ENCODE measurements at regions of chr19 and their contacts with region 1.

Region 1: GRCh38 chr19:50626795-50627194 is 12.9 kb downstream of the SYT3 start:
- DNase-seq: no peak
- H3K4me3 ChIP-seq: no peak overlapping the region
- H3K27ac ChIP-seq: no peak overlapping the region
- H3K4me1 ChIP-seq: no peaks in the 10 kb centered on the region
- H3K27me3 ChIP-seq: no peaks in the 10 kb centered on the region
- CTCF ChIP-seq: no peak

Region 2: GRCh38 chr19:50607874-50608785 is 18.7 kb before region 1 on chr19:
- CTCF ChIA-PET with region 1: interaction called, 11 read pairs
- POLR2A ChIA-PET with region 1: no interaction called
- intact Hi-C with region 1: no loop called
- DNase-seq: peak; percentile 98
- H3K4me3 ChIP-seq: peak overlapping the region; percentile 38
- H3K27ac ChIP-seq: no peak overlapping the region
- H3K4me1 ChIP-seq: peaks cover 5% of the 10 kb centered on the region
- H3K27me3 ChIP-seq: no peaks in the 10 kb centered on the region
- CTCF ChIP-seq: peak; percentile 96

Region 3: GRCh38 chr19:50724522-50725217 is 97.9 kb after region 1 on chr19:
- CTCF ChIA-PET with region 1: no interaction called
- POLR2A ChIA-PET with region 1: no interaction called
- intact Hi-C with region 1: no loop called
- DNase-seq: peak; percentile 100
- H3K4me3 ChIP-seq: peak overlapping the region; percentile 61
- H3K27ac ChIP-seq: peak overlapping the region; percentile 85
- H3K4me1 ChIP-seq: peaks cover 71% of the 10 kb centered on the region
- H3K27me3 ChIP-seq: no peaks in the 10 kb centered on the region
- CTCF ChIP-seq: peak; percentile 93